PC-9 (cell line): ENCODE measurements at regions of chr4 and their contacts with region 1.

Region 1: GRCh38 chr4:102868781-102869568 is at the start of gene CISD2:
- DNase-seq: peak; percentile 80 to 89
- H3K4me3 ChIP-seq: peak within 1 kb of the TSS; percentile 80
- H3K27ac ChIP-seq: peak within 1 kb of the TSS; percentile 94
- H3K4me1 ChIP-seq: peaks cover 34% of the 10 kb centered on the region
- H3K27me3 ChIP-seq: no peaks in the 10 kb centered on the region
- CTCF ChIP-seq: no peak
- total RNA-seq, gene CISD2: 23.1 and 26.9 TPM in 2 replicates

Region 2: DNA sequence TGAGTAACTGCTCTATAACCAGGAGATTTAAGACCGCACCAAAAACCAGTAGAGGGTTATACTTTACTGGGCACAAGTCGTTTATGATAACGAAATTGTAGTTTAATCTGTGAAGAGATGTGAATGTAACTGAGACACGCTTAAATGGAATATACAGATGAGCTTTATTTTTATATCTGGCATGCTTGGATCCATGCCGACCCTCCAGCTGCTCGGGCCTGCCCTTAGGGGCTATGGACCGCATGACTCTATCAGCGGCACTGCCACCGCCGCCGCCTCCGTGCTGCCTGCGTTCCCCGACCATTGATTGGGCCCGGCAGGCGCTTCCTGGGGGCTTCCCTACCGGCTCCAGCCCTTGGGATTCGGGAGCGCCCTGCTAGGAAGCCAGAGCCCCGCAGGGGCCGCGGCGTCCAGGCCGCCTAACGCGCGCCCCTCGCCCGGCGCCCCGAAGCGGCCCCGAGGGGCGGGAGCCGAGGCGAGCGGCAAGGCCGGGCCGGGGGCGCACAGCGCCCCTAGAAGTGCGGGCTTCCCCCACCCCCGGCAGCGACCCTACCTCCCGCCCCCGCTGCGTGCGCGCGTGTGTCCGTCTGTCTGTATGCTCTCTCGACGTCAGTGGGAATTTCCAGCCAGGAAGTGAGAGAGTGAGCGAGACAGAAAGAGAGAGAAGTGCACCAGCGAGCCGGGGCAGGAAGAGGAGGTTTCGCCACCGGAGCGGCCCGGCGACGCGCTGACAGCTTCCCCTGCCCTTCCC is 368.1 kb before region 1 on chr4 and contains the start of gene NFKB1:
- CTCF ChIA-PET with region 1: no interaction called
- POLR2A ChIA-PET with region 1: no interaction called
- intact Hi-C with region 1: loop called (anchors 2 kb)
- DNase-seq: peak in 1 of 2 experiments; percentile 35
- H3K4me3 ChIP-seq: peak within 1 kb of the TSS; percentile 80
- H3K27ac ChIP-seq: peak within 1 kb of the TSS; percentile 82
- H3K4me1 ChIP-seq: peaks cover 34% of the 10 kb centered on the region
- H3K27me3 ChIP-seq: no peaks in the 10 kb centered on the region
- CTCF ChIP-seq: no peak
- total RNA-seq, gene NFKB1: 11.6 and 16.8 TPM in 2 replicates

Region 3: DNA sequence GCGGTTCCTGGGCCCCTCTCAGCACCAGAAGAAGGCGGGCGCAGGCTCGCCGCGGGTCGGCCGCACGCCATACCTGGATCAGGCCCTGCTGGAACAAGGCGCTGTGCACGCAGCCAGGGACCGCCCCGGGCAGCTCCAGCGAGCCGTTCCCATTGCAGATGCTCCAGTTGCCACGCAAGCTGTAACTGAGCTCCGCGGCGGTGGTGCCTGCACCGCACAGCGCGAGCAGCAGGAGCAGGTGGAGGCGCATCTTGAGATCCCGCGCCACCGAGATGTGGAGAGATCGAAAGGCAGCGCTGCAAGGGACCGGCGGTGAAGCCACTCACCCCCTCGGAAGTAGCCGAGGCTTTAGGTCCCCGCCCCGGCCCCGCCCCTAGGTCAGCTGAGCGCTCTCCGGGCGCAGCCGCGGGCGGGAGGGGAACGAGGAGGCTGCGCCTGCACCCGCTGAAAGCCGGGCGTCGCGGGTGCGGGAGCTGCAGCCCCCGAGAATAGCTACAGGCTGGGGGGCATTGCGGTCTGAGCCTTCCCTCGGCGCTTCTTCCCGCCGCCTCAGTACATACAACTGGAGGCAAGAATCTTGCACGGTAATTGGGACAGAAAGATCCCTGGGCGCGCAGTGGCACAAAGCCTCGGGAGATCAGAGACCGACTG is 108.2 kb before region 1 on chr4 and contains the start of gene MANBA:
- CTCF ChIA-PET with region 1: no interaction called
- POLR2A ChIA-PET with region 1: interaction called, 3 read pairs
- intact Hi-C with region 1: loop called (anchors 2 kb)
- DNase-seq: peak; percentile 60 to 63
- H3K4me3 ChIP-seq: peak within 1 kb of the TSS; percentile 89
- H3K27ac ChIP-seq: no peak within 1 kb of the TSS
- H3K4me1 ChIP-seq: peaks cover 17% of the 10 kb centered on the region
- H3K27me3 ChIP-seq: no peaks in the 10 kb centered on the region
- CTCF ChIP-seq: no peak
- total RNA-seq, gene MANBA: 9.8 and 11.8 TPM in 2 replicates

Region 4: DNA sequence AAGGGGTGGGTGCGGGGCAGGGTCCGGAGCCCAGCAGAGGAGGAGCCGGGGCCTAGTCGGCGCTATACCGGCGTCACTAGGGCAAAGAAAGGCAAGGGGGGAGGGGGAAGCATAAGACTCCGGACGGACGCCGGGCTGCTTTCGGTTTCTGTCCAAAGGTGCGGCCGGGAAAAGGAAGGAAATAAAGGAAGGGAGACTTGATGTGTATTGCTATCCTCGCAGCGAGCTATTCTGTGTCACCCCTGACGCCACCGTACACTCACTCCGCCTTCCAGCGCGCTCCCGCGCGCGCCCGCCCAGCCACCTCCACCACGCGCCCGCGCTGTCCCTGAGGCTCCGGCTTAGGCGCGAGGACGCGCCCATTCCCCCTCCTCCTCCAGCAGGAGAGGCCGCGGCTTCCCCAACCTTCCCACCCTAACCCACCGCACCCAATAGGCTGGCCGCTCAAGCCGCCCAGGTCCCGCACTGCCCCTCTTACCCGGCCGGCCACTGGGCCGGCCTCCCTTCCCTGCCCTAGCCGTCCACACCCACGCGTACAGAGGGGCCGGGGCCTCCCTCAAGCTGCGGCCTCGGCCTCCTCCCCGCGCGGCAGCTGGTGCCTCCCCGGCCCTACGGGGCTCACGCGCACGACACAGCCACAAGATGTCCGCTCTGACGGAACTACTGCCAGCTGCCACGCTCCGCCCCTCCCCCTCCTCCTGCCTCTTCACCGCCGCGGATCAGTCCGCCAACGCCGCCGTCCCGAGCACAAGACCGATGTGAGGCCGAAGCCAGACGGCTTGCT is 41.9 kb before region 1 on chr4 and contains the start of gene UBE2D3:
- CTCF ChIA-PET with region 1: no interaction called
- POLR2A ChIA-PET with region 1: interaction called, 21 read pairs
- intact Hi-C with region 1: loop called (anchors 1 kb)
- DNase-seq: peak; percentile 75 to 85
- H3K4me3 ChIP-seq: peak within 1 kb of the TSS; percentile 95
- H3K27ac ChIP-seq: peak within 1 kb of the TSS; percentile 99
- H3K4me1 ChIP-seq: peaks cover 38% of the 10 kb centered on the region
- H3K27me3 ChIP-seq: no peaks in the 10 kb centered on the region
- CTCF ChIP-seq: no peak
- total RNA-seq, gene UBE2D3: 154 and 183 TPM in 2 replicates

Region 5: DNA sequence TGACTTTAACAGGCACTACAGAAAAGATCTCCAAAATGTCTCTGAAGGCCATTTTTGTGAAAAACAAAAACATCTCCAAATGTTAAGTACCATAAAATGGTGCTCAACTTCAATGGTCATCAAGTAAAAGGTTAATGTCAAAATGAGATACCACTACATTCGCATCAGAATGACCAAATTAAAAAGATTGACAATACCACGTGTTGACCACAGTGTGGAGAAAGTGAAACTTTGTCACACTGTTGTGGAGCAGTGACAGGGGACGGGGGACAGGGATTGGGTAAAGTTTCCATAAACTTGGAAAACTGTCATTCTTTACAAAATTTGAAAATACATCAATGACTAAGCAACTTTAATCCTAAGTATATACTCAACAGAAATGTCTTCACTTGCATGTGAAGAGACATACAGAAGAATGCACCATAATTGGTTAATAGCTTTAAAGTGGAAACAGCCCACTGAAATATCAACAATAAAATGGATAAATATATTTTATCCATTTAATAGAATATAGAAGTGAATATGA is 19.3 kb before region 1 on chr4:
- CTCF ChIA-PET with region 1: no interaction called
- POLR2A ChIA-PET with region 1: no interaction called
- intact Hi-C with region 1: no loop called
- DNase-seq: no peak
- H3K4me3 ChIP-seq: no peak overlapping the region
- H3K27ac ChIP-seq: no peak overlapping the region
- H3K4me1 ChIP-seq: no peaks in the 10 kb centered on the region
- H3K27me3 ChIP-seq: no peaks in the 10 kb centered on the region
- CTCF ChIP-seq: no peak

Region 6: DNA sequence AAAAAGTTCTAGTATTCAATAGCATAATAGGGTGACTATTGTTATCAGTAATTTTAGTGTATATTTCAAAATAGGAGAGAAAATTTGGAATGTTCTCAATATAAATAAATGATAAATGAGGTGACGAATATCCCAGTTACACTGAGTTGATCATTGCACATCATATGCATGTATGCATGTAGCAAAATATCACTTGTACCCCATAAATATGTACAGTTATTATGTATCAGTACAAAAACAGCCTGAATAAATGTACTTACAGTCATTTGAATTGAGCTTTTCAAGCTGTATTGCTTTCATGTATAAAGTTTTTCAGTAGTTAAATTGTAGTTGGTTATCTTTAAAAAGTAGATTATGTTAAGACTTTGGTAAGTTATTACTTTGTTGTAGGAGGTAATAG is 12.4 kb after region 1 on chr4:
- CTCF ChIA-PET with region 1: no interaction called
- POLR2A ChIA-PET with region 1: no interaction called
- intact Hi-C with region 1: no loop called
- DNase-seq: no peak
- H3K4me3 ChIP-seq: no peak overlapping the region
- H3K27ac ChIP-seq: no peak overlapping the region
- H3K4me1 ChIP-seq: no peaks in the 10 kb centered on the region
- H3K27me3 ChIP-seq: no peaks in the 10 kb centered on the region
- CTCF ChIP-seq: no peak

Region 7: DNA sequence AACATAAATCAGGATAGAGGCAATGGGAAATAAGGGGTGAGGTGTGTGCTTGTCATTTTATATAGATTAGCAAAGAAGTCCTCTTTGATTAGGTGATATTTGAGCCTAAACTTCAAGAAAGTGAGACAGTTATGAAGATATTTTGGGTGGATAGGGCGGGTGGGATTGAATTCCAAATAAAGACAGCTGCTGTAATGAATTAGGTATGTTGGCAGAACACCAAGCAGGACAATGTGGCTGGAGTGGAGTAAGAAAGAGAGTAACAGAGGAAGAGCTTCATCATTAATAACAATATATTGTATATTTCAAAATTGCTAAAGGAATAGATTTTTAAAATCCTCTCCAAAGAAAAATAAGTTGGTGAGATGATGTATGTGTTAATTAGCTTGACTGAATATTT is 420.2 kb after region 1 on chr4:
- CTCF ChIA-PET with region 1: no interaction called
- POLR2A ChIA-PET with region 1: interaction called, 38 read pairs
- intact Hi-C with region 1: no loop called
- DNase-seq: no peak
- H3K4me3 ChIP-seq: no peak overlapping the region
- H3K27ac ChIP-seq: no peak overlapping the region
- H3K4me1 ChIP-seq: no peaks in the 10 kb centered on the region
- H3K27me3 ChIP-seq: no peaks in the 10 kb centered on the region
- CTCF ChIP-seq: no peak